ENCODE measurements at regions of chr12 and their contacts with region 1.

Region 1: GRCh38 chr12:47819896-47820630 is at the start of gene HDAC7:
- DNase-seq: peak; percentile 55 to 86 (median 68)
- H3K4me3 ChIP-seq: peak within 1 kb of the TSS; percentile 79 to 84
- H3K4me3 Mint-ChIP-seq: peak within 1 kb of the TSS; percentile 91 to 97 (median 95)
- H3K27ac ChIP-seq: peak within 1 kb of the TSS; percentile 79
- H3K27ac Mint-ChIP-seq: peak within 1 kb of the TSS; percentile 93 to 98 (median 97)
- H3K4me1 ChIP-seq: peaks cover 87% of the 10 kb centered on the region
- H3K4me1 Mint-ChIP-seq: peaks cover 62 to 87% (median 77%) of the 10 kb centered on the region in 4 donors
- H3K27me3 ChIP-seq: no peaks in the 10 kb centered on the region
- H3K27me3 Mint-ChIP-seq: no peaks in the 10 kb centered on the region
- total RNA-seq, gene HDAC7: 139 to 142 TPM

Region 2: DNA sequence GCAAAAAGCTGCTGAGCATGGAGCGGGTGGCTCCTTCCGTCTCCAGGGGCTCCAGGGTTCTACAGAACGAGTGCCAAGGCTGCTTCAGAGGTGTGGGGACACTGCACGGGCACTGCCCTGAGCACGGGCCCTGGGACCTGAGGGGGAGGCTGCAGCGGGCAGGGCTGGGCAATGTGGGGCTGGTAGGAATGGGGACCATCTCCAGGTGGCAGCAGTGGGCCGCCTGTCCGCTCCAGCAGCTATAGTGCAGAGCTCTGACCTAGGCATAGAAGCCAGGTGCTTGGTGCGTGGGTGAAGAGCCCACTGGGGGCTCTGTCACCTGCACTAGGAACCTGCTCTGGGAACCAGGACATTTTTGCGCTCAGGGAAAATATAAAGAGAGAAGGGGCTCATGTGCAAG is 22.6 kb before region 1 on chr12:
- CTCF ChIA-PET with region 1: interaction called, 568 read pairs
- POLR2A ChIA-PET with region 1: interaction called, 516 read pairs
- intact Hi-C with region 1: no loop called
- DNase-seq: peak in 2 of 5 donors; percentile 20 to 21
- H3K4me3 ChIP-seq: no peak overlapping the region
- H3K4me3 Mint-ChIP-seq: no peak overlapping the region
- H3K27ac ChIP-seq: no peak overlapping the region
- H3K27ac Mint-ChIP-seq: peak overlapping the region in 3 of 7 donors; percentile 56 to 80 (median 73)
- H3K4me1 ChIP-seq: peaks cover 26% of the 10 kb centered on the region
- H3K4me1 Mint-ChIP-seq: peaks cover 15 to 32% (median 23%) of the 10 kb centered on the region in 4 donors
- H3K27me3 ChIP-seq: no peaks in the 10 kb centered on the region
- H3K27me3 Mint-ChIP-seq: no peaks in the 10 kb centered on the region

Region 3: GRCh38 chr12:47803191-47803875 is 16.7 kb before region 1 on chr12:
- CTCF ChIA-PET with region 1: interaction called, 568 read pairs
- POLR2A ChIA-PET with region 1: interaction called, 516 read pairs
- intact Hi-C with region 1: loop called (anchors 1 kb)
- DNase-seq: no peak
- H3K4me3 ChIP-seq: no peak overlapping the region
- H3K4me3 Mint-ChIP-seq: peak overlapping the region; percentile 54 to 82 (median 78)
- H3K27ac ChIP-seq: peak overlapping the region; percentile 28
- H3K27ac Mint-ChIP-seq: peak overlapping the region; percentile 72 to 94 (median 89)
- H3K4me1 ChIP-seq: peaks cover 85% of the 10 kb centered on the region
- H3K4me1 Mint-ChIP-seq: peaks cover 59 to 91% (median 78%) of the 10 kb centered on the region in 4 donors
- H3K27me3 ChIP-seq: no peaks in the 10 kb centered on the region
- H3K27me3 Mint-ChIP-seq: no peaks in the 10 kb centered on the region

Region 4: DNA sequence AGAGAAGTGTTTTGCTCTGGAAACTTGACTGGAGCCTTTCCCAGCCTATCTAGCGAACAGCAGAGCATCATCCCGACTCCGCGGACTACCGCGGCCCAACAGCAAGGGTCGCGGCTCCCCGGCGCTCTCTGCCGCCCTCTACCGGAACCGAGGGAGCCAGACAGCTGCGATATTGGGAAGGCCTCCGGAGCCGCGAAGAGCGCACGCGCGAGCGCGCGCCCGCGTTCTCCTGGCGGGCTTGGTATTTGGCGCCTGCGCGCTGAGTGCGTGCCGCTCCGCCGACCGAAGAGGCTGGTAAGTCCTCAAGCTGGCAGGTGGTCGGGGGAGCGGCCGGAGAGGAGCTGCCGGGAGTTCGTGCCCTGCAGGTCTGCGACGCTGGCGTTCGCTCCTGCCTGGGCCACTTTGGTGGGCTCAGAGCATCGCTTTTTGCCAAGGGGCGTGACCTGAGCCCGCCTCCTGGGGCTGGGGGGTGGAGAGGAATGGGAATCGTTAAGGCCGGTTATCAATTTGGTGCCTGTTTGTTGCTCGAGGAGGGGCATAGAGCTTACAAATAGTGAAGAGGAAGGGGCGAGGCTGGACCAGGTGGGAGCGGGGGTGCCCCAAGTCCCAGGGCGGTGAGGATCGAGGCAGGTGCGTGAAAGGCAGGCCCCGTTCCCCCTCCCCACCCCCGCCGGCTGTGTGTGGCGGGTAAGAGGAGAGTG is 143.4 kb after region 1 on chr12 and contains the start of gene TMEM106C:
- CTCF ChIA-PET with region 1: no interaction called
- POLR2A ChIA-PET with region 1: no interaction called
- intact Hi-C with region 1: no loop called
- DNase-seq: peak; percentile 89 to 93 (median 92)
- H3K4me3 ChIP-seq: peak within 1 kb of the TSS; percentile 84 to 92
- H3K4me3 Mint-ChIP-seq: peak within 1 kb of the TSS; percentile 93 to 99 (median 99)
- H3K27ac ChIP-seq: peak within 1 kb of the TSS; percentile 62
- H3K27ac Mint-ChIP-seq: peak within 1 kb of the TSS; percentile 91 to 97 (median 92)
- H3K4me1 ChIP-seq: peaks cover 19% of the 10 kb centered on the region
- H3K4me1 Mint-ChIP-seq: peaks cover 11 to 39% (median 32%) of the 10 kb centered on the region in 4 donors
- H3K27me3 ChIP-seq: no peaks in the 10 kb centered on the region
- H3K27me3 Mint-ChIP-seq: peaks cover 0 to 5% of the 10 kb centered on the region in 2 donors
- total RNA-seq, gene TMEM106C: 42.5 to 42.7 TPM